Activated CD4-positive, alpha-beta memory T cell treated with anti-CD3 and anti-CD28 coated beads for 36 hours (primary cell): ENCODE measurements at regions of chr3 and their contacts with region 1.

Region 1: GRCh38 chr3:16048435-16049318 is 125.8 kb upstream of the GALNT15 start:
- DNase-seq: peak; percentile 44
- H3K4me3 Mint-ChIP-seq: peak overlapping the region; percentile 16
- H3K27ac Mint-ChIP-seq: no peak overlapping the region
- H3K4me1 Mint-ChIP-seq: peaks cover 3% of the 10 kb centered on the region
- H3K27me3 Mint-ChIP-seq: peaks cover under 1% of the 10 kb centered on the region

Region 2: DNA sequence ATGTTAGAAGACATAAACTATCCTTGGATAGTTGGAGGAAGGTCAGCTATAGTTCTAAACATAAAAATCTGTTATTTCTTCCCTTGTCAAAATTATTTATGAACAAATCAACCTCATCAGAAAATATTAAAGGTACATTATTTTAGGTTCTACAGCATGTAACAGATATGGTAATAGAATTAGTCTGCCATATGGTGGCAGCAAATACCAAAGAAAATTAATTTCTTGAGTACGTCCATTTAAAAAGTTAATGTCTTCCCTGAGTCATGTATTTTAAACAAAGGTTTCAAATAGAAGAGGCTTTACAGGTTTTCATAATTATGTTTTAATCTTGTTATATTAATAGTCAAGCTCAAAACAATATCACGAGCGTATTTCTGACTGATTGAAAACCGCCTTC is 233.0 kb before region 1 on chr3:
- CTCF ChIA-PET with region 1: interaction called, 5 read pairs
- POLR2A ChIA-PET with region 1: no interaction called
- intact Hi-C with region 1: loop called (anchors 10 kb)
- DNase-seq: no peak
- H3K4me3 Mint-ChIP-seq: no peak overlapping the region
- H3K27ac Mint-ChIP-seq: no peak overlapping the region
- H3K4me1 Mint-ChIP-seq: peaks cover 48% of the 10 kb centered on the region
- H3K27me3 Mint-ChIP-seq: no peaks in the 10 kb centered on the region

Region 3: DNA sequence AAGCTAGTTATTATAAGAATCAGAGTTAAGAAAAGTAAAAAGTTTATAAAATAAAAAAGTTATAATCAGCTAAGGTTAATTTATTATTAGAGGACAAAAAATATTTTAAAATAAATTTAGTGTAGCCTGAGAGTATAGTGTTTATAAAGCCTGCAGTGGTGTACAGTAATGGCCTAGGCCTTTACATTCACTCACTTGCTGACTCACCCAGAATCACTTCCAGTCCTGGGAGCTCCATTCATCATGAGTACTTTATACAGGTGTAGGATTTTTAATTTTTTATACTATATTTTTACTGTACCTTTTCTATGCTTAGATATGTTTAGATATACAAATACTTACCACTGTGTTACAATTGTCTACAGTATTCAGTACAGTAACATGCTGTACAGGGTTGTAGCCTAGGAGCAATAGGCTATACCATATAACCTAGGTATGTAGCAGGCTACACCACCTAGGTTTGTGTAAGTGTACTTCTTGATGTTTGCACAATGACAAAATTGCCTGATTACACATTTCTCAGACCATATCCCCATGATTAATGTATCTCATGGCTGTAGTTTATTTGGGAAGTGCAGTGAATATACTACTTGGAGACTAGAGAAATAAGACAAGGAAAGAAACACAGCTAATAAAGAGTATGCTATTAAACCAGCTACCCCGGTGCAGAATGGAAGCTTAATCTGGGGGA is 23.9 kb after region 1 on chr3:
- CTCF ChIA-PET with region 1: interaction called, 10 read pairs
- POLR2A ChIA-PET with region 1: no interaction called
- intact Hi-C with region 1: no loop called
- DNase-seq: no peak
- H3K4me3 Mint-ChIP-seq: no peak overlapping the region
- H3K27ac Mint-ChIP-seq: no peak overlapping the region
- H3K4me1 Mint-ChIP-seq: no peaks in the 10 kb centered on the region
- H3K27me3 Mint-ChIP-seq: peaks cover 2% of the 10 kb centered on the region

Region 4: GRCh38 chr3:16177962-16178627 is 129.4 kb after region 1 on chr3:
- CTCF ChIA-PET with region 1: interaction called, 108 read pairs
- POLR2A ChIA-PET with region 1: no interaction called
- intact Hi-C with region 1: loop called (anchors 1 kb)
- DNase-seq: peak; percentile 74
- H3K4me3 Mint-ChIP-seq: no peak overlapping the region
- H3K27ac Mint-ChIP-seq: no peak overlapping the region
- H3K4me1 Mint-ChIP-seq: peaks cover 3% of the 10 kb centered on the region
- H3K27me3 Mint-ChIP-seq: peaks cover 13% of the 10 kb centered on the region

Region 5: DNA sequence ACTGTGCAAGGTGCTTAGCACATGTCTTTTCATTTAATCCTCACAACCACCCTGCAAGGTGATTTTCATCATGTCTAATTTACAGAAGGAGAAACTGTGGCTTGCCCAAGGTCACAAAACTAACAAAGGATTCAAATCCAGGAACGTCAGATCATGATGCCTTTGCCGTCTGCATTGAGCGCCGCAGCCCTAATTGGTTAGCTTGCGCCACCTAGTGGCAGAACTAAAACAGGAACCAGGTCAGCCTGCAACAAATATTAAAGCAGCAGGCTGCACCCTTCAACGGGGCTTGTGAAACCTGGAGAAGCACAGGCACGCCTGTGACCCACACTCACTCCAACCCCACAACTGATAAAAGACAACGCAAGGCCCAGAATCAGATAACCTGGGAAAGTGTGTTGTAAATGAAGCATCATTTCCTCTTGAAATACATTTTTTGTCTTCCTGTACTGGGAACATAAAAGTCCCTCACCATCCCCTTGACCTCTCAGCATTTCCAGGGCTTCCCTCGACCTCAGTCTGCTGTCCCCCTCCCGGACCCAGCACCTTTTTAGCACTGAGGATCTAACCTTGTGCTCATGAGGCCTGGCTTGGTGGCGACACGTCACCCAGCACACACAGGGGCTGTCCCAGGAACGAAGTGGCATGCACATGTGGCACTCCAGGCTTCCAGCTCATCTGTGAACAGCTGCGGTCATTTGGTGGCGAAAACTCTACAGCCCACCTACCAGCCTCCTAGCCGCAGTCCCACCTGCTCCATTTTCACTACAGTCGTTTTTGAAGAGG is 198.8 kb after region 1 on chr3:
- CTCF ChIA-PET with region 1: interaction called, 30 read pairs
- POLR2A ChIA-PET with region 1: no interaction called
- intact Hi-C with region 1: loop called (anchors 1 kb)
- DNase-seq: peak; percentile 84
- H3K4me3 Mint-ChIP-seq: no peak overlapping the region
- H3K27ac Mint-ChIP-seq: no peak overlapping the region
- H3K4me1 Mint-ChIP-seq: peaks cover 17% of the 10 kb centered on the region
- H3K27me3 Mint-ChIP-seq: no peaks in the 10 kb centered on the region

Region 6: DNA sequence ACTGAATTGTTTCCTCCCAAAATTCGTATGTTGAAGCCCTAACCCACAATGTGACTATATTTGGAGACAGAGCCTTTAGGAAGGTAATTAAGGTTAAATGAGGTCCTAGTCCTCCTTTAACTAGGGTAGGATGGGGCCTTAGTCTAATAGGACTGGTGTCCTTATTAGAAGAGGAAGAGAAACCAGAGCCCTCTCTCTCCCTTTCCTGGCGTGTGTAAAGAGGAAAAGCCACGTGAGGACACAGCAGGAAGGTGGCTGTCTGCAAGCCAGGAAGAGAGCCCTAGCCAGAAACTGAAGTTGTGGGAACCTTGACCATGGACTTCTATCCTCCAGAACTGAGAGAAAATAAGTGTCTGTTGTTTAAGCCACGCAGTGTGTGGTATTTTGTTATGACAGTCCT is 310.7 kb after region 1 on chr3:
- CTCF ChIA-PET with region 1: no interaction called
- POLR2A ChIA-PET with region 1: no interaction called
- intact Hi-C with region 1: no loop called
- DNase-seq: no peak
- H3K4me3 Mint-ChIP-seq: no peak overlapping the region
- H3K27ac Mint-ChIP-seq: peak overlapping the region; percentile 38
- H3K4me1 Mint-ChIP-seq: peaks cover 16% of the 10 kb centered on the region
- H3K27me3 Mint-ChIP-seq: no peaks in the 10 kb centered on the region

Region 7: GRCh38 chr3:16550676-16551341 is 502.1 kb after region 1 on chr3:
- CTCF ChIA-PET with region 1: no interaction called
- POLR2A ChIA-PET with region 1: no interaction called
- intact Hi-C with region 1: loop called (anchors 2 kb)
- DNase-seq: peak; percentile 82
- H3K4me3 Mint-ChIP-seq: peak overlapping the region; percentile 3
- H3K27ac Mint-ChIP-seq: peak overlapping the region; percentile 59
- H3K4me1 Mint-ChIP-seq: peaks cover 3% of the 10 kb centered on the region
- H3K27me3 Mint-ChIP-seq: peaks cover 5% of the 10 kb centered on the region